Mammary epithelial cell (primary cell): ENCODE measurements at regions of chr10 and their contacts with region 1.

Region 1: DNA sequence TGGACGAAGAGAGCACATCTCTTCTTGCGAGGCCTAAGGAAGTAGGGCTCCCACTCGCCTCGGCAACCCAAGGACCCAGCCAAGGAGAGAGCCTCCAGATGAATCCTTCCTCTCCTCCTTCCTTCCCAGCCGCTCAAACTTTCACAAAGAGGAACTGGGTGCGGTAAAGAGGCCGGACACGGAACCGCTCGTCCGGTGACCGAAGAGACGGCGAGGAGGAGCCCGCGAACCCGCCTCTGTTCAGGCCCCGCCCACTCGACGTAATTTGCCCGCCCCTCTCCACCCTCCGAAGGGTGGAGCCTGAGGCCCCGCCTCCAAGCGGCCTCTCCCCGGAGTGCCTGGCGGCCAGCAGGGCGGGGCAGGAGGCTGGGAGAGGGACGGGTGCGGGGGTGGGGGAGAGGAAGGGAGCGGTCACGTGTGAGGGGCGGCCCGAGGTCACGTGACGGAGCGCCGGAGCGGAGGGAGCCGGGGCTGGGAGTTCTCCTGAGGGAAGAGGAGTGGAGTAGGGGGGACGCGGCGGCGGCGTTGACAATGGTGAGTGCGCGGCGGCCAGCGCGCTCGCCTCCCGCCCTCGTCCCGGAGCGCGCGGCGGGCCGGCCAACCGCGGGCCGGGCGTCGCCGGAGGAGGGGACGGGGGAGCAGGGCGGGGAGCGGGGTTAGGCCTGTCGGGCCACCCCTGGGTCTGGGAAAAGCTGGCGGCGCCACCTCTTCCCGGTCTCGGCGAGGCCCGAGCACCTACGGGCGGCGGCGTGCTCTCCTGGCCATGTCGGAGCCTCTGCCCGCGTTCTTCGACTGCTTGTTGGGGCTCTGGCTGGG is at the start of gene VPS26A:
- DNase-seq: peak; percentile 99
- H3K4me3 ChIP-seq: peak within 1 kb of the TSS; percentile 81 to 96 (median 83)
- H3K27ac ChIP-seq: peak within 1 kb of the TSS; percentile 96
- H3K4me1 ChIP-seq: peaks cover 4% of the 10 kb centered on the region
- H3K27me3 ChIP-seq: no peaks in the 10 kb centered on the region
- CTCF ChIP-seq: no peak
- total RNA-seq, gene VPS26A: 30.3 to 75.8 TPM

Region 2: GRCh38 chr10:69179743-69180524 is 56.0 kb after region 1 on chr10 and contains the start of gene SUPV3L1:
- CTCF ChIA-PET with region 1: no interaction called
- dilution Hi-C with region 1: no loop called
- in situ Hi-C with region 1: no loop called
- intact Hi-C with region 1: loop called (anchors 2 kb)
- DNase-seq: peak; percentile 91
- H3K4me3 ChIP-seq: peak within 1 kb of the TSS; percentile 75 to 98 (median 88)
- H3K27ac ChIP-seq: peak within 1 kb of the TSS; percentile 99
- H3K4me1 ChIP-seq: peaks cover 7% of the 10 kb centered on the region
- H3K27me3 ChIP-seq: no peaks in the 10 kb centered on the region
- CTCF ChIP-seq: no peak
- total RNA-seq, gene SUPV3L1: 26.8 to 36.7 TPM

Region 3: DNA sequence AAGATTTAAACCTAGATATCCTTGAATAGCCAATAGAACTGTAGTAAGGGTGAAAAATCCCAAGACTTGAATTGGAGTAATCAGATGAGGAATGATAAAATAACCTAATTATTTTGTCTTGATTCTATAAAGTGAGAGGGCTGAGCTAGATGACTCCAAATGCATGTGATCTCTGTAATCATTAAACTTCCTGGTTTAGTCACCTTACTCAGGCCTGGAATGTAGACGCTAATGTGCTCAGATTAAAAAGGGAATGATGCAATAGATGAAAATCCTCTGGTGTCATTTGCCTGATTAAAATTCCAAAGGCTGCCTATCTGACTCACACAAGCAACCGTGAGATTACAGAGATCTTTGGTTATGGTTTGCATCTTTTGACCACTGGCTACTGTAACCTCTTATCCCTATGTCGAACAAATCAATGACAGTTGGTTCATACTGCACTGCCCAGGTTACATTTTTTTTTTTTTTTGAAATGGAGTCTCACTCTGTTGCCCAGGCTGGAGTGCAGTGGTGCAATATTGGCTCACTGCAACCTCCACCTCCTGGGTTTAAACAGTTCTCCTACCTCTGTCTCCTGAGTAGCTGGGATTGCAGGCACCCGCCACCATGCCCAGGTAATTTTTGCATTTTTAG is 93.3 kb after region 1 on chr10:
- CTCF ChIA-PET with region 1: no interaction called
- dilution Hi-C with region 1: no loop called
- in situ Hi-C with region 1: no loop called
- intact Hi-C with region 1: loop called (anchors 1 kb)
- DNase-seq: peak; percentile 91
- H3K4me3 ChIP-seq: no peak overlapping the region
- H3K27ac ChIP-seq: peak overlapping the region; percentile 72
- H3K4me1 ChIP-seq: peaks cover 29% of the 10 kb centered on the region
- H3K27me3 ChIP-seq: no peaks in the 10 kb centered on the region
- CTCF ChIP-seq: no peak